ENCODE measurements at regions of chr10 and their contacts with region 1.

Region 1: GRCh38 chr10:15167411-15168295 is 840 bp downstream of the NMT2 start:
- DNase-seq: no peak
- H3K4me3 ChIP-seq: peak overlapping the region; percentile 89
- CTCF ChIP-seq: peak; percentile 68

Region 2: DNA sequence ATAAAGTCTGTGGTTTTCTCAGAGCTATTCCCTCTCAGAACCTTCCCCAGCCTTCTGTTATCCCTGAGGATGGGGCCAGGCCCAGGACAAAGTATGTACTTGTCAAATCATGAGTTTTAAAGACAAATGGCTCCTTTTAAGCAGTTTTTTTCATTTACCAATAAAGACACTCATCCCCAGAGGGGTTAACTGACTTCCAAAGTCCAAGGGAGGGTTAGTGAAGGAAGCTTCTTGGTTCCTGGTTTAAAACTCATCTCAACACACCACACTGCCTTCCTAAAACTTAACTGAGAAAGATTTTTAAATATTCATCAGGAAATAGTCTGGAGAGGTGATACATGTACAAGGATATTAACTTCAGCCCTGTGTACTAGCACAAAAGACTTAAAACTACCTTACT is 15.1 kb before region 1 on chr10:
- CTCF ChIA-PET with region 1: interaction called, 11 read pairs
- POLR2A ChIA-PET with region 1: no interaction called
- DNase-seq: no peak
- H3K4me3 ChIP-seq: no peak overlapping the region
- CTCF ChIP-seq: no peak

Measured in AG04449 (cell line).